Prostate gland (tissue), 2 donors: ENCODE measurements at regions of chr17 and their contacts with region 1.

Region 1: GRCh38 chr17:50114849-50115357 is 15.1 kb downstream of the SAMD14 start:
- DNase-seq: no peak
- H3K4me3 ChIP-seq: no peak overlapping the region
- H3K27ac ChIP-seq: no peak overlapping the region
- H3K4me1 ChIP-seq: no peaks in the 10 kb centered on the region
- H3K27me3 ChIP-seq: no peaks in the 10 kb centered on the region
- CTCF ChIP-seq: peak in 2 of 4 experiments; percentile 31 to 43
- POLR2A ChIP-seq: no peak

Region 2: GRCh38 chr17:50047488-50048126 is 67.3 kb before region 1 on chr17:
- intact Hi-C with region 1: no loop called
- DNase-seq: no peak
- H3K4me3 ChIP-seq: no peak overlapping the region
- H3K27ac ChIP-seq: no peak overlapping the region
- H3K4me1 ChIP-seq: peaks cover 10% of the 10 kb centered on the region
- H3K27me3 ChIP-seq: no peaks in the 10 kb centered on the region
- CTCF ChIP-seq: no peak
- POLR2A ChIP-seq: no peak

Region 3: GRCh38 chr17:50151041-50151936 is 36.4 kb after region 1 on chr17:
- intact Hi-C with region 1: loop called (anchors 5 kb)
- DNase-seq: peak; percentile 86
- H3K4me3 ChIP-seq: peak overlapping the region; percentile 69 to 86
- H3K27ac ChIP-seq: peak overlapping the region; percentile 77 to 90
- H3K4me1 ChIP-seq: peaks cover 19% of the 10 kb centered on the region
- H3K27me3 ChIP-seq: no peaks in the 10 kb centered on the region
- CTCF ChIP-seq: peak; percentile 43 to 76 (median 56)
- POLR2A ChIP-seq: peak; percentile 73

Region 4: DNA sequence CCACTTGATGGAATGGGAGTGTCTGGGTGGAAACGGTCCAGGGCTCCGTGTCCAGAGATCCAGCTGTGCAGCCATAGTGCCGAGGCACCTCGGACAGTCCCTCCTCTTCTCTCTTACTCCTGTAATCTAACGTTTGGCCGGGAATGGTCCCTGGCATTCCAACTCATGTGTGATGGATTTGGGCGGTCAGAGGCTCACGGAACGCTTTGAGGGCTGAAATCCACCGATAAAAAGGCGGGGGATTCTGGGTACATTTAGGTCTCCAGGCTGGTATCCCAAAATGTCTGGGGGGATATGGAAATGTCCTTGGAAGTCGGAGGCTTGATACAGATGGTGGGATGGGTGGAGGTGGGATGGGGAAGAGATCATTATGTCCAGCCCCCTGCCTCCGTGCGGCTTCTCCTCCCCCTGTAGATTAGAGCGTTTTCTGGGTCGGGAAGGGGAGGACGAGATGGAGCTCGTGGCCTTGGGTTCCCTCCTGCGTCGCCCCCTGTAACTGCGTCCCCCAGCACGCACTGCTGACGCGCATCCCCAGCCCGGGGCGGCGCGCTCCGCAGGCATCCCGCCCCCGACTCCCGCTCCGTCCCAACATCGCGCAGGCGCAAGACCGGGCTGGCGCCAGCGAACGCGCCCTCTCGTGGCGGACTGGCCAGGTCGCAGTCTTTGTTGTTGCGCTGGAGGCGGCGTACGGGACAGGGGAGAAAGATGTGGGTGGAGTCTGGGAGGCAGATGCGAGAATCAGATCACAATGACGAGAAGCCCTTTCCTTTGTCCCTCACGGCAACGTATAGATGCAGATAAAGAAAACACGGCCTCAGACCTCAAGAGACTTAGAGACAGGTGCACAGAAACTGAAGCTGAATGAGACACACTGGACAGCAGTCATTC is 46.4 kb after region 1 on chr17:
- intact Hi-C with region 1: loop called (anchors 2 kb)
- DNase-seq: peak; percentile 90
- H3K4me3 ChIP-seq: peak overlapping the region; percentile 39 to 45
- H3K27ac ChIP-seq: peak overlapping the region; percentile 52 to 75
- H3K4me1 ChIP-seq: no peaks in the 10 kb centered on the region
- H3K27me3 ChIP-seq: no peaks in the 10 kb centered on the region
- CTCF ChIP-seq: peak; percentile 84 to 99 (median 94)
- POLR2A ChIP-seq: peak; percentile 69